ENCODE measurements at regions of chr16 and their contacts with region 1.

Region 1: DNA sequence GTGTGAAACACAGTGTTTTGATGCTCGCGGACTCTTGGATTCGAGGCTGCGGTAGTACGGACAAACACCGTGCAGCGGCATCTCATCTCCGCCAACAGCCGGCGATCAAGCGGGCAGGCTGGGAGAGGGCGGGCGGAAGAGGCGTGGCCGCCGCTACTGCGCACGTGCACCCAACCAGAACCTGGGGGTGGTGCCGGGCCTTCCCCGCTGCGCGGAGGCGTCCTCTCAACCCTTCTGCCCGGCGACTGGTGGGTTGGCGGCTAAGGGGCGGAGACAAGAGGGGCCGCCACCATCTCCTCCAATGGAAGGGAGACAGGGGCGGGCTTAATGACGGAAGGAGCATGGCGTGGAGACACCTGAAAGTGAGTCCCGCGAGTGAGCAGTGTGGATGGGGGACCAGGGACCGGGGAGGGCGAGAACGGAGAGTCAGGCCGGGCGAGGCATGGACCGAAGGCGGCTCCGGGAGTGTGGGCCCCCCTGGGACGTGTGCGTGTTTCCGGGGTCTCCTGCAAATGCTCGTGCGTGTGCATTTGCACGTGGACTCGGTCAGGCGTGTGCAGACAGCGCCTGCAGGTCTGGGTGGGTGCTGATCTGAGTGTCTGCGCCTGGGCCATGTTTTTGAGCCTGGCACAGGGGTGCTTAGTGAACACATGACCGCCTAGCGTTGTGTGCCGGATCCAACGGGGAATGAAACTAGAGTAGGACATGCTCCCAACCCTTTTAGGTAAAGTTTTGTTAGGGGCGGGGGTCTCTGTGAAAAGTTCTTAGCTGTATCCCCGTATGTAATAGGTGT is at the start of gene DHODH:
- DNase-seq: peak; percentile 94 to 98
- H3K4me3 ChIP-seq: peak within 1 kb of the TSS; percentile 87
- H3K27ac ChIP-seq: no peak within 1 kb of the TSS
- H3K4me1 ChIP-seq: peaks cover 13% of the 10 kb centered on the region; the same call in 1 of the 2 replicates
- H3K27me3 ChIP-seq: no peaks in the 10 kb centered on the region
- CTCF ChIP-seq: no peak
- total RNA-seq, gene DHODH: 10.6 and 12.1 TPM in 2 replicates

Region 2: DNA sequence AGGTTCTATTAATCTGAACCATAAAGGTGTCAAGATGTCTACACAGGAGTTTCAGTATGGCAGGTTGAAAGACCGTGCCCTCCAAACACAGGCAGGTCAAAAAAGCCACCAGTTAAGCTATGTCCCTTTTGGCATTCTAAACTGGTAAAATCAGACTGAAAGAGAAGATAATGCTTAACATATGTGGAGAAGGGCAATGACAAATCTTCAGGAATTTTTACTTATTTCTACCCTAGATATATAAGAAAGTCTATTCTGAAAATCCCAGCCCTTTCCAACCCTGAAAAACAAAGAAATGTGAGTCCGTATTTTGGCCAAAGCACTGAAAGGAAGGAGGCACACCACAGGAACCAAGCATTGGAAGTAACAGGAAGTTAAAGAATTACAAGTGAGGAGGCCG is 216.4 kb before region 1 on chr16:
- CTCF ChIA-PET with region 1: no interaction called
- POLR2A ChIA-PET with region 1: no interaction called
- intact Hi-C with region 1: no loop called
- DNase-seq: no peak
- H3K4me3 ChIP-seq: no peak overlapping the region
- H3K27ac ChIP-seq: no peak overlapping the region
- H3K4me1 ChIP-seq: no peaks in the 10 kb centered on the region
- H3K27me3 ChIP-seq: no peaks in the 10 kb centered on the region
- CTCF ChIP-seq: no peak

Region 3: GRCh38 chr16:72093448-72094265 is 85.0 kb after region 1 on chr16 and contains the starts of genes DHX38 and TXNL4B:
- CTCF ChIA-PET with region 1: no interaction called
- POLR2A ChIA-PET with region 1: no interaction called
- intact Hi-C with region 1: loop called (anchors 1 kb)
- DNase-seq: peak; percentile 91 to 98
- H3K4me3 ChIP-seq: peak within 1 kb of the TSS; percentile 95
- H3K27ac ChIP-seq: peak within 1 kb of the TSS; percentile 53; the same call in 1 of the 2 replicates
- H3K4me1 ChIP-seq: peaks cover 26% of the 10 kb centered on the region
- H3K27me3 ChIP-seq: no peaks in the 10 kb centered on the region
- CTCF ChIP-seq: no peak
- total RNA-seq, gene DHX38: 58.9 and 71.1 TPM in 2 replicates
- total RNA-seq, gene TXNL4B: 11.9 and 12.2 TPM in 2 replicates

Region 4: DNA sequence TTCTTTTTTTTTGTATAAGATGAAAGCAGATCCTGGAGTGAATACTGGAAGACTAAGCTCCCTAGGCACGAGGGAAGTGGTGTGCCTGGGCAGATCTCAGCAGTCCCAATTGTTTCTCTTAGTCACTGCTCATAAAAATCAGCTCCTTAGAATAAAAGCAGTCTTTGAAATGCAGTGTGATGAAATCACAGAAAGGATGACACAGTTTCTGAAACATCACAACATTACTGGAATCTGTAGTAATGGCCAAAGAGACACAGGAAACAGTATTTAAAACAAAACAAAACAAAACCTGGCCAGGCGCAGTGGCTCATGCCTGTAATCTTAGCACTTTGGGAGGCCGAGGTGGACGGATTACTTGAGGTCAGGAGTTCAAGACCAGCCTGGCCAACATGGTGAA is 1074.0 kb after region 1 on chr16:
- CTCF ChIA-PET with region 1: no interaction called
- POLR2A ChIA-PET with region 1: interaction called, 16 read pairs
- intact Hi-C with region 1: no loop called
- DNase-seq: peak in 1 of 2 experiments; percentile 84
- H3K4me3 ChIP-seq: no peak overlapping the region
- H3K27ac ChIP-seq: peak overlapping the region; percentile 54
- H3K4me1 ChIP-seq: 0 out of 2 replicates have a peak, but pooled peaks cover 3% of the 10 kb centered on the region
- H3K27me3 ChIP-seq: no peaks in the 10 kb centered on the region
- CTCF ChIP-seq: no peak

Measured in PC-9 (cell line).